ENCODE measurements at regions of chr2 and their contacts with region 1.

Region 1: GRCh38 chr2:150503364-150503763 is 15.9 kb upstream of the RND3 start:
- DNase-seq: no peak
- H3K4me3 ChIP-seq: no peak overlapping the region
- H3K27ac ChIP-seq: no peak overlapping the region
- H3K4me1 ChIP-seq: no peaks in the 10 kb centered on the region
- H3K27me3 ChIP-seq: no peaks in the 10 kb centered on the region
- CTCF ChIP-seq: no peak
- EP300 ChIP-seq: no peak
- POLR2A ChIP-seq: no peak

Region 2: GRCh38 chr2:149561309-149561926 is 941.9 kb before region 1 on chr2:
- intact Hi-C with region 1: no loop called
- DNase-seq: peak in 1 of 2 donors; percentile 60
- H3K4me3 ChIP-seq: no peak overlapping the region
- H3K27ac ChIP-seq: no peak overlapping the region
- H3K4me1 ChIP-seq: peaks cover 0 to 36% (median 17%) of the 10 kb centered on the region in 4 donors
- H3K27me3 ChIP-seq: no peaks in the 10 kb centered on the region
- CTCF ChIP-seq: peak in 5 of 7 experiments; percentile 49 to 94 (median 83)
- EP300 ChIP-seq: no peak
- POLR2A ChIP-seq: no peak

Region 3: GRCh38 chr2:150610671-150611279 is 107.4 kb after region 1 on chr2:
- intact Hi-C with region 1: no loop called
- DNase-seq: peak; percentile 27 to 53
- H3K4me3 ChIP-seq: no peak overlapping the region
- H3K27ac ChIP-seq: no peak overlapping the region
- H3K4me1 ChIP-seq: peaks cover 0 to 10% (median 8%) of the 10 kb centered on the region in 4 donors
- H3K27me3 ChIP-seq: no peaks in the 10 kb centered on the region
- CTCF ChIP-seq: peak in 4 of 7 experiments; percentile 22 to 47 (median 40)
- EP300 ChIP-seq: no peak
- POLR2A ChIP-seq: no peak

Region 4: DNA sequence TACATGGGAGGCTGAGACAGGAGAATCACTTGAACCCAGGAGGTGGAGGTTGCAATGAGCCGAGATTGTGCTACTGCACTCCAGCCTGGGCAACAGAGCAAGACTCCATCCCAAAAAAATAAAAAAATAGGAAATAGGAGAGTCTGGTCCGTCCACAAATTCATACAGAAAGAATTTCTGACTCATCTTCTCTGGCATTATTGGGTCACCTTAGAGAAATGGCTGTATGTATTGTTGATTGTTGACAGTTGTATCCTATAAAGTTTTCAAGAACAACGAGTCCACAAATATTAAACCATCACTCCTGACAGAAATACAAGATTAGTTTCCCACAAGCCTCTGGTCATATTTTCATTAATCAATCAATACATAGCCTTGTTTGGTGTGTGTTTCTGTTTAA is 737.9 kb after region 1 on chr2:
- intact Hi-C with region 1: loop called (anchors 5 kb)
- DNase-seq: no peak
- H3K4me3 ChIP-seq: no peak overlapping the region
- H3K27ac ChIP-seq: no peak overlapping the region
- H3K4me1 ChIP-seq: peaks cover 0 to 9% (median 0%) of the 10 kb centered on the region in 4 donors
- H3K27me3 ChIP-seq: no peaks in the 10 kb centered on the region
- CTCF ChIP-seq: no peak
- EP300 ChIP-seq: no peak
- POLR2A ChIP-seq: no peak

Measured in stomach (tissue), 19 donors.